Left cardiac atrium (tissue), 4 donors: ENCODE measurements at regions of chr2 and their contacts with region 1.

Region 1: GRCh38 chr2:67904966-67905365 is 157.8 kb downstream of the C1D start:
- DNase-seq: no peak
- ATAC-seq: no peak

Region 2: GRCh38 chr2:67871686-67872412 is 33.1 kb before region 1 on chr2:
- intact Hi-C with region 1: loop called in 1 of 2 experiments (anchors 2 kb)
- DNase-seq: no peak
- ATAC-seq: no peak

Region 3: GRCh38 chr2:68110102-68110501 is 205.1 kb after region 1 on chr2:
- intact Hi-C with region 1: no loop called
- DNase-seq: no peak
- ATAC-seq: no peak